ENCODE measurements at regions of chr12 and their contacts with region 1.

Region 1: GRCh38 chr12:7583571-7583970 is 80.0 kb upstream of the CD163 start:
- DNase-seq: no peak
- H3K4me3 Mint-ChIP-seq: no peak overlapping the region
- H3K27ac Mint-ChIP-seq: no peak overlapping the region
- H3K4me1 Mint-ChIP-seq: peaks cover 2% of the 10 kb centered on the region
- H3K27me3 Mint-ChIP-seq: peaks cover 18% of the 10 kb centered on the region

Region 2: GRCh38 chr12:7219599-7220243 is 363.9 kb before region 1 on chr12:
- CTCF ChIA-PET with region 1: no interaction called
- intact Hi-C with region 1: loop called (anchors 5 kb)
- DNase-seq: peak; percentile 87
- H3K4me3 Mint-ChIP-seq: no peak overlapping the region
- H3K27ac Mint-ChIP-seq: no peak overlapping the region
- H3K4me1 Mint-ChIP-seq: no peaks in the 10 kb centered on the region
- H3K27me3 Mint-ChIP-seq: no peaks in the 10 kb centered on the region

Region 3: DNA sequence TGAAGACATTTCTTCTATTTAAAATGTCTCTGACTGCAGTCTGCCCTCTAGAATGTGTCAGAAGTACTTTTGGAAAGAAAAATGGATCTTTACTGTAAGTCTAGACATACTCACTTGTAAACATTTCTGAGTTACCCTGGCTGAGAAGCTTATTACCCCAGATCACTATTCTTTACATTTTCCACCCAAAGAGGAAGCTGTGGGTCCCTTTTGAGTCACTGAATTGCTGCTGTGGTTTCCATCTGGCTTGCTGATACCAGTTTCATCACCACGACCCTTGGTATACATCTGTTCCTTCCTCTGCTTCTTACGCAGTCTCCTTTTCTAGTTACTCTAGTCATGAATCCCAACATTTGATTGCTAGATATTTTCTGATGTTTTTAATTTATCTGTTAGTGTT is 909.5 kb after region 1 on chr12:
- CTCF ChIA-PET with region 1: no interaction called
- intact Hi-C with region 1: no loop called
- DNase-seq: peak; percentile 83
- H3K4me3 Mint-ChIP-seq: no peak overlapping the region
- H3K27ac Mint-ChIP-seq: peak overlapping the region; percentile 80
- H3K4me1 Mint-ChIP-seq: peaks cover 25% of the 10 kb centered on the region
- H3K27me3 Mint-ChIP-seq: peaks cover 5% of the 10 kb centered on the region

Measured in activated naive CD4-positive, alpha-beta T cell treated with anti-CD3 and anti-CD28 coated beads for 36 hours (primary cell).